ENCODE measurements at regions of chr21 and their contacts with region 1.

Region 1: DNA sequence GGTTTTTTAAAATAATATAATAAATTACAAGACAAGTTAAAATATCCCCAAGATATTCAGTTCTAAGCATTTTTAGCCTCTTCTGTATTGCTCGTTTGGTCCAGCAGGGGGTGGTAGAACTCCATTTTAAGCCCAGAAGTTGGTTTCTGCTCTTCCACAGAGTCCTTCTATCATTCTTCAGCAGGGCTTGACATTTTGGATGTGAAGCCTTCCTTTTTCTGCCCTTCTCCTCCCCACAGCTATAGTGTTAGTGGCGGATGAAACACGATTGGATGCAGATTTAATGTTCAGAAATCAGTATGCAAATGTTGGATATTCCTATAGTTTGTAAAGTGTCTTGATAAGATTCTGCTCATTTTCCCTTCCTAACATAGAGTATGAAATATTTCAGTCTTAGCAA is 1.4 kb downstream of the NCAM2 start:
- DNase-seq: peak in 4 of 9 donors; percentile 14 to 38 (median 26)
- ATAC-seq: no peak
- H3K4me3 ChIP-seq: no peak overlapping the region
- H3K4me3 Mint-ChIP-seq: peak overlapping the region in 6 of 10 donors; percentile 1 to 26 (median 7)
- H3K27ac ChIP-seq: no peak overlapping the region
- H3K27ac Mint-ChIP-seq: no peak overlapping the region
- H3K4me1 ChIP-seq: peaks cover 0 to 12% of the 10 kb centered on the region in 2 donors
- H3K4me1 Mint-ChIP-seq: peaks cover 5 to 19% (median 14%) of the 10 kb centered on the region in 7 donors
- H3K27me3 ChIP-seq: peaks cover 0 to 4% of the 10 kb centered on the region in 2 donors
- H3K27me3 Mint-ChIP-seq: peaks cover 18 to 51% (median 26%) of the 10 kb centered on the region in 5 donors

Region 2: DNA sequence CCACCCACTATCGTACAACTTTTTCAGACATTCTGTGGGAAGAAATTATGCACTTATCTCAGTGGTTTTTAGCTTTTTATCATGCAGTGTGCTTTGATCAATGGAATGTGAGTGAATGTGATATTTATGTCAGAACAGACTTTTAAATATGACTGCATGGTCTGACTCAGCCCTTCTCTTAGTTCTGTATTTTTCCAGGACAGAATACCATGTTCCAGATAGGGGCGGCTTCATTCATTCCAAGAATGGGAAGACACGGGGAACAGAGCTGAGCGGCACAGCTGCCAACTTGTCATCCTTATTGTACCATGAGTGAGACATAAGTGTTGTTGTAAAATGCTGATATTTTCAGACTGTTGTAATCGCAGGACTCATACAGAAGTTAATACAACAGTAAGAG is 216.0 kb before region 1 on chr21:
- CTCF ChIA-PET with region 1: no interaction called
- POLR2A ChIA-PET with region 1: no interaction called
- intact Hi-C with region 1: no loop called
- DNase-seq: no peak
- ATAC-seq: no peak
- H3K4me3 ChIP-seq: no peak overlapping the region
- H3K4me3 Mint-ChIP-seq: no peak overlapping the region
- H3K27ac ChIP-seq: no peak overlapping the region
- H3K27ac Mint-ChIP-seq: no peak overlapping the region
- H3K4me1 ChIP-seq: no peaks in the 10 kb centered on the region
- H3K4me1 Mint-ChIP-seq: no peaks in the 10 kb centered on the region
- H3K27me3 ChIP-seq: no peaks in the 10 kb centered on the region
- H3K27me3 Mint-ChIP-seq: no peaks in the 10 kb centered on the region

Region 3: GRCh38 chr21:21101911-21102310 is 102.3 kb after region 1 on chr21:
- CTCF ChIA-PET with region 1: no interaction called
- POLR2A ChIA-PET with region 1: no interaction called
- intact Hi-C with region 1: loop called in 1 of 2 experiments (anchors 2 kb)
- DNase-seq: no peak
- ATAC-seq: no peak
- H3K4me3 ChIP-seq: no peak overlapping the region
- H3K4me3 Mint-ChIP-seq: no peak overlapping the region
- H3K27ac ChIP-seq: no peak overlapping the region
- H3K27ac Mint-ChIP-seq: no peak overlapping the region
- H3K4me1 ChIP-seq: no peaks in the 10 kb centered on the region
- H3K4me1 Mint-ChIP-seq: no peaks in the 10 kb centered on the region
- H3K27me3 ChIP-seq: no peaks in the 10 kb centered on the region
- H3K27me3 Mint-ChIP-seq: no peaks in the 10 kb centered on the region

Region 4: DNA sequence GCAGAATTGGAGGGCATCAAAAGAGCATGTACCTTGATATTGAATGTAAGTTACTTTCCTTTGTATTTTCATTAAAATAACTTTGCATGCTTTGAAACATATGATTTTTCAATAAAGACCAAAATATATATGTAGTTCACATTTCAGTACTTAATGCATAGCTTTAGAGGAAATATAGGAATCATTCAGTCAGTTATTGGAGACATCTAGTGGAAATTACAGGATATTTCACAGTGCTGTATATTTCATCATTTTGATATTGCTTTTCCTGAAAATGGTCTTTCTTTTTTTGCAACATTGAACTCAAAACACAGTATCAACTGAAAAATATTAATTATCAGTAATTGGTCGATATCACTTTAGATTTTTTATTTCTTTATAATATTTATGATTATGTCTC is 374.3 kb after region 1 on chr21:
- CTCF ChIA-PET with region 1: no interaction called
- POLR2A ChIA-PET with region 1: no interaction called
- intact Hi-C with region 1: loop called in 1 of 2 experiments (anchors 5 kb)
- DNase-seq: no peak
- ATAC-seq: no peak
- H3K4me3 ChIP-seq: no peak overlapping the region
- H3K4me3 Mint-ChIP-seq: no peak overlapping the region
- H3K27ac ChIP-seq: no peak overlapping the region
- H3K27ac Mint-ChIP-seq: no peak overlapping the region
- H3K4me1 ChIP-seq: no peaks in the 10 kb centered on the region
- H3K4me1 Mint-ChIP-seq: no peaks in the 10 kb centered on the region
- H3K27me3 ChIP-seq: no peaks in the 10 kb centered on the region
- H3K27me3 Mint-ChIP-seq: no peaks in the 10 kb centered on the region

Region 5: GRCh38 chr21:22120616-22121266 is 1121.1 kb after region 1 on chr21:
- CTCF ChIA-PET with region 1: no interaction called
- POLR2A ChIA-PET with region 1: no interaction called
- intact Hi-C with region 1: loop called in 1 of 2 experiments (anchors 5 kb)
- DNase-seq: no peak
- ATAC-seq: no peak
- H3K4me3 ChIP-seq: no peak overlapping the region
- H3K4me3 Mint-ChIP-seq: no peak overlapping the region
- H3K27ac ChIP-seq: no peak overlapping the region
- H3K27ac Mint-ChIP-seq: no peak overlapping the region
- H3K4me1 ChIP-seq: no peaks in the 10 kb centered on the region
- H3K4me1 Mint-ChIP-seq: no peaks in the 10 kb centered on the region
- H3K27me3 ChIP-seq: no peaks in the 10 kb centered on the region
- H3K27me3 Mint-ChIP-seq: no peaks in the 10 kb centered on the region

Region 6: DNA sequence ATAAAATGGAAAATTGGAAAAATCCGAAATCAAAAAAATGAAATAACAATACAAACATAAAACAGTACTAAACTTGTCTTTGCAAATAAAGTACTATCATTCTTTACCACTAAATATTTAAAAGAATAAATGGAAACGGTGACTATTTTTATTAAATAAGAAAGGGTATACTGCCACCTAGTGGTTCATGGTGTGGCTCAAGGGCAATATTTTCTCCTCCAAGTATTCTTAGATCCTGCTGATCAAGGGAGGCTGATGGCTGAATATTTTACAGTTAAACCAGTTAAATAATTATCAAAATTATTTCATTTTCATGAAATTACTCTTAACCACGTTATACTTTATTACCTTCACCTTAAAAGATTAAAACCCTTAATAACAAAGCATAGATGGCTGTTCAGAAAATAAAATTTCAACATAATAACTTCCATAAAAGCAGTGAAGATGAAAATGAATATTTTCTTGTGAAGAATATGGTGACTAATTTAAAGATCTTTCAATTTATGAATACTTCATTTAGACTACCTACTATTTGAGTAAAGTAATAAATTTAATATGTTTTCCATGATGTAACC is 1792.4 kb after region 1 on chr21:
- CTCF ChIA-PET with region 1: no interaction called
- POLR2A ChIA-PET with region 1: no interaction called
- intact Hi-C with region 1: loop called in 1 of 2 experiments (anchors 1 kb)
- DNase-seq: peak in 7 of 9 donors; percentile 12 to 54 (median 19)
- ATAC-seq: peak; percentile 38
- H3K4me3 ChIP-seq: no peak overlapping the region
- H3K4me3 Mint-ChIP-seq: no peak overlapping the region
- H3K27ac ChIP-seq: no peak overlapping the region
- H3K27ac Mint-ChIP-seq: no peak overlapping the region
- H3K4me1 ChIP-seq: no peaks in the 10 kb centered on the region
- H3K4me1 Mint-ChIP-seq: peaks cover 0 to 2% (median 0%) of the 10 kb centered on the region in 7 donors
- H3K27me3 ChIP-seq: no peaks in the 10 kb centered on the region
- H3K27me3 Mint-ChIP-seq: no peaks in the 10 kb centered on the region

Measured in naive thymus-derived CD4-positive, alpha-beta T cell (primary cell).